Prostate gland (tissue), 2 donors: ENCODE measurements at regions of chr7 and their contacts with region 1.

Region 1: GRCh38 chr7:30564243-30564892 is 30.3 kb upstream of the GARS1 start:
- DNase-seq: peak; percentile 81
- H3K4me3 ChIP-seq: no peak overlapping the region
- H3K27ac ChIP-seq: no peak overlapping the region
- H3K4me1 ChIP-seq: no peaks in the 10 kb centered on the region
- H3K27me3 ChIP-seq: no peaks in the 10 kb centered on the region
- CTCF ChIP-seq: peak; percentile 79 to 92 (median 89)
- POLR2A ChIP-seq: no peak

Region 2: GRCh38 chr7:30168835-30169573 is 395.4 kb before region 1 on chr7:
- intact Hi-C with region 1: loop called (anchors 5 kb)
- DNase-seq: no peak
- H3K4me3 ChIP-seq: no peak overlapping the region
- H3K27ac ChIP-seq: no peak overlapping the region
- H3K4me1 ChIP-seq: peaks cover 18% of the 10 kb centered on the region
- H3K27me3 ChIP-seq: no peaks in the 10 kb centered on the region
- CTCF ChIP-seq: no peak
- POLR2A ChIP-seq: no peak

Region 3: DNA sequence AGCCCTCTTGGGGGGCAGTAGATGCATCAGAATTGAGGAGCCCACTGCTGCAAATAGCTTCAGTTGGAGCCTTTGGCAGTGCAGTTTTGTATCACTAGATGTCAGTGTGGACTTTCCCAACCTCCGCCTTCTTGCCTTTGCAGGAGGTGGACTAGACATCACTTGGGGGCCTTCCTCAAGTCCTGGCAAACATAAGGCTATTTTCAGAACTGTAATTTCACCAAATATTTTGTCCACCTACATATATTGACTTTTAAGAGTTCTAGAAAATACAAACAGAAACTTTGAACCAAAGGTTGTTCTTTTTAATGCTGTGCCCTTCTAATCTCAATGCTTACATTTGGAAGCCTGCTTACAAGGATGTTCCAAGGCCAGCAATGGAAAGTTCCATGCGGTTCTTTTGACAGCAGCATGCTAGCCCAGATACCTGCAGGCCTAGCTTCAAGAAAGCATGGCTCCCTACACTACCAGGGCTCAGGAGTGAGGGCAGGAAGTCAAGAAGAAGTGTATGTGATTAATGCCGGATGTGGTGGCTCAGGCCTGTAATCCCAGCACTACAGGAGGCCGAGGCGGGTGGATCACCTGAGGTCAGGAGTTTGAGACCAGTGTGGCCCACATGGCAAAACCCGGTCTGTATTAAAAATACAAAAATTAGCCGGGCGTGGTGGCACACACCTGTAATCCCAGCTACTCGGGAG is 288.0 kb before region 1 on chr7:
- intact Hi-C with region 1: loop called (anchors 10 kb)
- DNase-seq: no peak
- H3K4me3 ChIP-seq: no peak overlapping the region
- H3K27ac ChIP-seq: no peak overlapping the region
- H3K4me1 ChIP-seq: no peaks in the 10 kb centered on the region
- H3K27me3 ChIP-seq: no peaks in the 10 kb centered on the region
- CTCF ChIP-seq: peak in 2 of 4 experiments; percentile 51
- POLR2A ChIP-seq: no peak

Region 4: DNA sequence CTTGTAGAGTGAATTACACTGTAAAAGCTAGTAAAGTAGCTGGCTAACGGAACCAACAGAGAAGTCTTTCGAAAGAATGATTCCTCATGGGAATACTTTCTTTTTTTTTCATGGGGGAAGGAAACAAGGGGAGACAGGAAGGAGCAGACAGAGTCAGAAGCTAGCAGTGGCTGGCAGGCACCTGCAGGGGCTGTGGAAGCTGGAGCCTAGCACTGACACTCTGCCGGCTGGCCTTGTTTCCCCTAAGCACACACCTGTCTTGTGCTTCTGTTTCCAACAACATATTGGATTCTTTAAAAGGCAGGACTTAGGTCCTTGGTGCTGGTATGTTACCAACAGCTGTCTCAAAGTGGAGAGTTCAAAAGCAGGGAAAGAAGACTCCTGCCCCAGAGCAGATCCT is 110.4 kb before region 1 on chr7:
- intact Hi-C with region 1: no loop called
- DNase-seq: no peak
- H3K4me3 ChIP-seq: no peak overlapping the region
- H3K27ac ChIP-seq: no peak overlapping the region
- H3K4me1 ChIP-seq: no peaks in the 10 kb centered on the region
- H3K27me3 ChIP-seq: no peaks in the 10 kb centered on the region
- CTCF ChIP-seq: no peak
- POLR2A ChIP-seq: no peak

Region 5: DNA sequence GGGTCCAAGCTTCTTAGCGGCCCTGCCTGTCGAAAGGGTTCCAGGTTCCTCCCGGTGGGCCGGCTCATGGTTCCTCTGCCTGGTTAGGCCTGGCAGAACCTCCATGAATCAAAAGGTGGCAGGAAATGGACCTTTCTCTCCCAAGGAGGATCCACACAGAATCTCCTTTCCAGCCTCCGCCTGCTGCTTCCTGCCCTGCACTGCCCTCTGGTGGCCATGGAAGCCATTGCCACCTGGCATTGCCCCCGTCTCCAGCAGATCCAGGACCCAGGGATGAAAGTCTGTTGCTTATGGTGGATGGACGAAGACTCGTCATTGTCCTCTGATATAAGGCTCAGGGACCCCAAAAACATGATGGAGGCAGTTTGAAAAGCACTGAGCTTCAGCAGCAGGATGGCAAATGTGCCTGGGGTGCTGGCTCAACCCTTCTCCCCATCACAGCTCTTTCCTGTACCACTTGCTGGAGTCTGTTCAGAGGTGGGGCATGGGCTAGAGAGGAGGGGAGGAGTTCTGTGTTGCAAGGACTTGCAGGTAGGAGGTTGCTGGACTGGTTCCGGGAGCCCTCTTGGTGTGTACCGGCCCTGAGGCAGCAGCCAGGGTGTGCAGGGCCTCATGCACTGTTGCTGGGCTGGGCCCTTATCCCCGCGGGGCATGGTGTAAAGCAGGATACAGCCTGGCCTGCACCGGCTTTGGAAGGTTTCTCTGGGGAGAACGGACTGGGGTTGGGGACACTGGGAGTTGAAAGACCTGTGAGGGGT is 176.2 kb after region 1 on chr7:
- intact Hi-C with region 1: loop called (anchors 10 kb)
- DNase-seq: peak; percentile 57
- H3K4me3 ChIP-seq: no peak overlapping the region
- H3K27ac ChIP-seq: no peak overlapping the region
- H3K4me1 ChIP-seq: no peaks in the 10 kb centered on the region
- H3K27me3 ChIP-seq: no peaks in the 10 kb centered on the region
- CTCF ChIP-seq: peak; percentile 85 to 91 (median 88)
- POLR2A ChIP-seq: no peak